Endothelial cell of umbilical vein (primary cell): ENCODE measurements at regions of chr7 and their contacts with region 1.

Region 1: GRCh38 chr7:27774717-27775328 is 34.9 kb downstream of the TAX1BP1 start:
- DNase-seq: peak; percentile 59
- H3K4me3 ChIP-seq: no peak overlapping the region
- H3K27ac ChIP-seq: no peak overlapping the region
- H3K4me1 ChIP-seq: no peaks in the 10 kb centered on the region
- H3K27me3 ChIP-seq: no peaks in the 10 kb centered on the region
- CTCF ChIP-seq: peak; percentile 45 to 46
- POLR2A ChIP-seq: no peak

Region 2: GRCh38 chr7:27204851-27205337 is 569.9 kb before region 1 on chr7:
- CTCF ChIA-PET with region 1: interaction called, 24 read pairs
- POLR2A ChIA-PET with region 1: no interaction called
- dilution Hi-C with region 1: no loop called
- intact Hi-C with region 1: no loop called
- DNase-seq: no peak
- H3K4me3 ChIP-seq: no peak overlapping the region
- H3K27ac ChIP-seq: no peak overlapping the region
- H3K4me1 ChIP-seq: peaks cover 18% of the 10 kb centered on the region
- H3K27me3 ChIP-seq: peaks cover 81 to 85% of the 10 kb centered on the region in 2 experiments
- CTCF ChIP-seq: no peak
- POLR2A ChIP-seq: no peak

Region 3: DNA sequence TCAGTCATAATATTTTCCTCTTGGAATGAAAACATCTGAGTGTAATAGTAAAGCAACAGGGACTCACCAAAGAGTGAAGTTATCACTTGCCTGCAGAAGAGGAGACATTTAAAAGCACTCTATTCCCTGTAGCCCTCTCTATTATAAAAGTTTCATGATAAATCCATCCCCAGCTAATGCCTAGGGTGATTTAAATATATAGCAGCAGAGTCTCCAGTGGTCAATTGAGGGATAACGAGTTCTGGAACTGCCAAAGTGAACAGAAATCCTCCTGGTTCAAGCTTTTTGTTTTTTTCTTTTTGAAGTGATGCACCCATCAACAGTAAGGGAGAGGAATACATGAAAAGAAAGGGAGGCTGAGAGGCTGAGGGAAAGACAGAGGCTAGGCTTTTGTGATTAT is 444.9 kb before region 1 on chr7:
- CTCF ChIA-PET with region 1: no interaction called
- POLR2A ChIA-PET with region 1: no interaction called
- dilution Hi-C with region 1: no loop called
- intact Hi-C with region 1: no loop called
- DNase-seq: no peak
- H3K4me3 ChIP-seq: no peak overlapping the region
- H3K27ac ChIP-seq: no peak overlapping the region
- H3K4me1 ChIP-seq: no peaks in the 10 kb centered on the region
- H3K27me3 ChIP-seq: peaks cover 3 to 6% of the 10 kb centered on the region in 2 experiments
- CTCF ChIP-seq: no peak
- POLR2A ChIP-seq: no peak

Region 4: DNA sequence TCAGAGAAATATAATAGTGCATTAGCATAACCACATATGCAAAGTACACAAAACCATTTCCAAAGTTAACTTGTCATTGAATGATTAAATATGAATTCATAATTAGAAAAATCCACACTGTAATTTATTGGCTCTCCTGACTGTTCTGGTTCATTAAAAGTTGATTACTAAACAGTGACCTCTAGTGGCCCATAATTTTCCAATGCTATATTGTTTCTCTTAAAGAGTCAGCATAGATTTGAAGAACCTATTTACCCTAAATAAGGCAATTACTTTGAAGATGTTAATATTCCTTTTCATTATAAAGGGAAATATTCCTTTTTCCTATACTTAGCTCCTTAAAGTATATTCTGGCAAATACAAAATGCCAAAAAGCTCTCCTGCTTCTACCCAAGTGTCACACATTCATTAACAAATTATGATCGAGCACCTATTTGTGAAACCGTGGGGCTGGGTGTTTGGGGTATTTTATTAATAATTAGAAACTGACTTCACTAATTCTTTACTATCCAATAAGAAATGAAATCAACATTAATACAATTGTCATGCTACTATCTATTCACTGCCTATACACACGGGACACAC is 198.4 kb before region 1 on chr7:
- CTCF ChIA-PET with region 1: interaction called, 12 read pairs
- POLR2A ChIA-PET with region 1: no interaction called
- dilution Hi-C with region 1: no loop called
- intact Hi-C with region 1: loop called (anchors 2 kb)
- DNase-seq: peak; percentile 70
- H3K4me3 ChIP-seq: no peak overlapping the region
- H3K27ac ChIP-seq: no peak overlapping the region
- H3K4me1 ChIP-seq: no peaks in the 10 kb centered on the region
- H3K27me3 ChIP-seq: no peaks in the 10 kb centered on the region
- CTCF ChIP-seq: peak; percentile 22 to 26
- POLR2A ChIP-seq: no peak

Region 5: DNA sequence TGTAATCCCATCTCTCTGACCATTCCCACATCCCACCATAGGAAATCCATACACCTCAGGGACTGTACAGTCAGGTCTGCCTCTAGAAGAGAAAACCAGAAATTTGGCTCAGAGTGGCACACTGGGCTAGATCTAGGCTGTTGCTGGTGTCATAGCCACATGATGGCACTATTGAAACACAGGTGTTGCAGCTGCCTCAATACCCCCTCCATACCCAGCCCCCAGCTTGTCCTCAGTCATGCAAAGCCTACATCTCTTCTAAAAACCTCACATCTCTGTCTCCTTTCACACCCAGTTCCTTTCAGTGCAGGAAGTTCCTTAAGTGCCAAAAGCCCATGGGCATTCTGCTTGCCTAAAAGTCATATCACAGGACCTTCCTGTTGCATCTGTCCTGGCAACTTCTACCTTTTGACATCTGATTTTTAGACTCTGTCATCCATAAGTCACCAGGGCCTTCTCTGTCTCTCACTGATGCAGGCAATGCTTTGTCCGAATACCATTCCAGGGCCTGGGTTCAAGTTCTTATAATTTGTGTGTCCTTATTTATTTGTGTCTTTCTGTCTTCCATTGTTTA is 85.1 kb before region 1 on chr7:
- CTCF ChIA-PET with region 1: interaction called, 37 read pairs
- POLR2A ChIA-PET with region 1: no interaction called
- dilution Hi-C with region 1: no loop called
- intact Hi-C with region 1: loop called (anchors 1 kb)
- DNase-seq: peak; percentile 69
- H3K4me3 ChIP-seq: no peak overlapping the region
- H3K27ac ChIP-seq: no peak overlapping the region
- H3K4me1 ChIP-seq: peaks cover 10% of the 10 kb centered on the region
- H3K27me3 ChIP-seq: no peaks in the 10 kb centered on the region
- CTCF ChIP-seq: peak; percentile 42 to 72
- POLR2A ChIP-seq: no peak

Region 6: GRCh38 chr7:27745064-27745583 is 29.7 kb before region 1 on chr7:
- CTCF ChIA-PET with region 1: interaction called, 57 read pairs
- POLR2A ChIA-PET with region 1: no interaction called
- dilution Hi-C with region 1: no loop called
- intact Hi-C with region 1: loop called (anchors 2 kb)
- DNase-seq: peak; percentile 85
- H3K4me3 ChIP-seq: no peak overlapping the region
- H3K27ac ChIP-seq: peak overlapping the region; percentile 49
- H3K4me1 ChIP-seq: peaks cover 11% of the 10 kb centered on the region
- H3K27me3 ChIP-seq: no peaks in the 10 kb centered on the region
- CTCF ChIP-seq: peak; percentile 54 to 65
- POLR2A ChIP-seq: no peak

Region 7: GRCh38 chr7:27756298-27756697 is 18.5 kb before region 1 on chr7:
- CTCF ChIA-PET with region 1: interaction called, 42 read pairs
- POLR2A ChIA-PET with region 1: no interaction called
- dilution Hi-C with region 1: no loop called
- intact Hi-C with region 1: no loop called
- DNase-seq: no peak
- H3K4me3 ChIP-seq: no peak overlapping the region
- H3K27ac ChIP-seq: no peak overlapping the region
- H3K4me1 ChIP-seq: no peaks in the 10 kb centered on the region
- H3K27me3 ChIP-seq: no peaks in the 10 kb centered on the region
- CTCF ChIP-seq: no peak
- POLR2A ChIP-seq: no peak